ENCODE measurements at regions of chr11 and their contacts with region 1.

Region 1: GRCh38 chr11:126194121-126194543 is 17.3 kb downstream of the RPUSD4 start:
- DNase-seq: peak; percentile 82
- H3K4me3 ChIP-seq: no peak overlapping the region; a peak in 1 of 4 replicates
- H3K27ac ChIP-seq: no peak overlapping the region
- H3K4me1 ChIP-seq: peaks cover 0 to 14% of the 10 kb centered on the region in 2 experiments; a peak in 1 of 4 replicates
- H3K27me3 ChIP-seq: no peaks in the 10 kb centered on the region
- CTCF ChIP-seq: peak; percentile 85
- EP300 ChIP-seq: no peak
- RAD21 ChIP-seq: peak; percentile 99

Region 2: DNA sequence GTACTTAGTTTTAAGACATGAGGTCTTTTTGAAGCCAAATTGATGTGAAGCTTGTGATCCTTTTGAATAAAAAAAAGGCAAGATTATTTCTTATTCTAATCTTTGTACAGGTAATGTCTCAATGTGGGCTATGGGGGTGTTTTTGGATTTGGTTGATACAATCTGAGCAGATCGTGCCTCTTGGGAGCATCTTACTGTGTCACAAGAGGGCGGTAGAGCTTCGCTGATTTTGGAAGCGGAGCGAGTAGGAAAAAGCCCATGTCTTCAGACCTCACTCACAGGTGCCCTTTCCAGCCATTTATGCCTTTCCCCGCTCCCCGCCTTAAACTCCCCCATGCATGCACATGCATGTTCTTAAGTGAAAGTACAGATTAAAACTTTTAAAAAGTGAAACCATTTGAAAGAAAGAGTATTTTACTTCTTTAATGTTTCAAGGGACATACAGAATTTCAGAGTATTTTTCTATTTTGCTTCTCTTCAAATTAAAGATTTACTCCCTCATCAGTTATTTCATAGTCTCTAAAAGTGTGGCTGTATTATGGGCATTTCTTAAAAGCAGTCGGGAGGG is 271.0 kb before region 1 on chr11:
- CTCF ChIA-PET with region 1: interaction called, 63 read pairs
- POLR2A ChIA-PET with region 1: interaction called, 5 read pairs
- DNase-seq: peak; percentile 74
- H3K4me3 ChIP-seq: no peak overlapping the region; a peak in 1 of 4 replicates
- H3K27ac ChIP-seq: no peak overlapping the region
- H3K4me1 ChIP-seq: peaks cover 0 to 26% of the 10 kb centered on the region in 2 experiments; a peak in 1 of 4 replicates
- H3K27me3 ChIP-seq: peaks cover 38% of the 10 kb centered on the region; the same call in 1 of the 2 replicates
- CTCF ChIP-seq: peak; percentile 90
- EP300 ChIP-seq: no peak
- RAD21 ChIP-seq: peak; percentile 98

Region 3: GRCh38 chr11:125941619-125942611 is 252.2 kb before region 1 on chr11:
- CTCF ChIA-PET with region 1: interaction called, 15 read pairs
- POLR2A ChIA-PET with region 1: no interaction called
- DNase-seq: peak; percentile 72
- H3K4me3 ChIP-seq: no peak overlapping the region; a peak in 1 of 4 replicates
- H3K27ac ChIP-seq: no peak overlapping the region
- H3K4me1 ChIP-seq: peaks cover 0 to 13% of the 10 kb centered on the region in 2 experiments; a peak in 1 of 4 replicates
- H3K27me3 ChIP-seq: no peaks in the 10 kb centered on the region
- CTCF ChIP-seq: peak; percentile 64
- EP300 ChIP-seq: no peak
- RAD21 ChIP-seq: peak; percentile 64

Region 4: GRCh38 chr11:126160345-126161022 is 33.6 kb before region 1 on chr11:
- CTCF ChIA-PET with region 1: interaction called, 10 read pairs
- POLR2A ChIA-PET with region 1: no interaction called
- DNase-seq: peak; percentile 69
- H3K4me3 ChIP-seq: no peak overlapping the region
- H3K27ac ChIP-seq: peak overlapping the region in 1 of 2 experiments; percentile 8; a peak in 1 of 4 replicates
- H3K4me1 ChIP-seq: peaks cover 9 to 40% of the 10 kb centered on the region in 2 experiments; a peak in 2 of 4 replicates
- H3K27me3 ChIP-seq: no peaks in the 10 kb centered on the region
- CTCF ChIP-seq: no peak
- EP300 ChIP-seq: no peak
- RAD21 ChIP-seq: no peak

Region 5: GRCh38 chr11:126165757-126166156 is 28.4 kb before region 1 on chr11:
- CTCF ChIA-PET with region 1: interaction called, 12 read pairs
- POLR2A ChIA-PET with region 1: no interaction called
- DNase-seq: no peak
- H3K4me3 ChIP-seq: no peak overlapping the region
- H3K27ac ChIP-seq: no peak overlapping the region; a peak in 1 of 4 replicates
- H3K4me1 ChIP-seq: peaks cover 9 to 41% of the 10 kb centered on the region in 2 experiments; a peak in 3 of 4 replicates
- H3K27me3 ChIP-seq: no peaks in the 10 kb centered on the region
- CTCF ChIP-seq: no peak
- EP300 ChIP-seq: no peak
- RAD21 ChIP-seq: no peak

Region 6: DNA sequence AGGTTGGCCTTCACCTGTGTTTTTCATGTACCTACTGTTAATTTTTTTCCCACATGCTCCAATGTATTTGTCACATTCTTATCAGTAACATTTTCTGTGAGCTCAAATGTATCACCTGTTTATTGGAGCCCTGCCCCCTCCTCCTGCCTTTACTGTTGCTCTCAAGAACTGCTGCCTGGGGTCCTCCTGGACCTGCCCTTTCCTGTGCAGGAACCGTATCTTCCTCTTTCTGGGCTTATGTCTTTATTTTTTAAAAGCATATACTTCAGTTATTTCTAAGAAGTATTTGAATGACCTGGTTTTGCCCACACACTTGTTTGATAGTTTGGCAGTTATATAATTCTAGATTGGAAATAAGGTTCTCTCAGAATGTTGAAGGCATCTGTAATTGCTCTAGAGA is 23.4 kb after region 1 on chr11:
- CTCF ChIA-PET with region 1: no interaction called
- POLR2A ChIA-PET with region 1: no interaction called
- DNase-seq: no peak
- H3K4me3 ChIP-seq: no peak overlapping the region
- H3K27ac ChIP-seq: no peak overlapping the region
- H3K4me1 ChIP-seq: peaks cover 4 to 7% of the 10 kb centered on the region in 2 experiments
- H3K27me3 ChIP-seq: no peaks in the 10 kb centered on the region
- CTCF ChIP-seq: no peak
- EP300 ChIP-seq: no peak
- RAD21 ChIP-seq: no peak